Adrenal gland (tissue), 19 donors: ENCODE measurements at regions of chr17 and their contacts with region 1.

Region 1: GRCh38 chr17:55053855-55054254 is 85.3 kb downstream of the STXBP4 start:
- DNase-seq: no peak
- H3K4me3 ChIP-seq: no peak overlapping the region
- H3K27ac ChIP-seq: no peak overlapping the region
- H3K4me1 ChIP-seq: no peaks in the 10 kb centered on the region
- H3K27me3 ChIP-seq: no peaks in the 10 kb centered on the region
- CTCF ChIP-seq: peak; percentile 26 to 64 (median 48)
- POLR2A ChIP-seq: no peak

Region 2: DNA sequence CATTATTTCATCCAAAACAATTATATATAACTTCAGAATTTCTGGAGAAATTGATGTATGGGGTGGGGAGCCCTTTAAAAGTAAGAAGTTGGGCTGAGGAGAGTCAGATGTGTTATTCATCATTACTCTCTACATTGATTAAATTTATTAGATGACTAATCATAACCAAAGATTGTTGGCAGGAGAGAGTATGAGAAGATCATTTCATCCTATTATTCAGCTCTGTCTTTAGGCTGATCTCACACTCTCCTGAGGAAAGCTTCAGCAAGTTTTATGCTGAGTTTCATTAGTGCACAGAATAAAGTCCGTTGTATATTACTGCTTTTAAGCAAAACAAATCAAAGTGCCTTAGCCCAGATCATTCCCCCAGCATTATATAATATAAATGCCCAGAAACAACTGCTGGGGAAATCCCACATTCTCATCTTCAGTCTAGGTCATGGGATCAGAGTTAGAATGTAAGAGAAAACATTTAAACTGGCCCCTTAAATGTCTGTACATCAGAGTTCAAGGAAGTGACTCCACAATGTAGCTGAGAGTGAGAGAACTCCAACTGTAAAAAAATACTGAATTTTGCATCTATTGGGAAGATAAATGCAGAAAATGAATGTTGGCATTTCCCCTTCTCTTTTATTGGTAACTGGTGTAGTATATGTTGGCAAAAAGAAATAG is 80.8 kb after region 1 on chr17:
- intact Hi-C with region 1: no loop called
- DNase-seq: no peak
- H3K4me3 ChIP-seq: no peak overlapping the region
- H3K27ac ChIP-seq: no peak overlapping the region
- H3K4me1 ChIP-seq: peaks cover 0 to 6% of the 10 kb centered on the region in 2 donors
- H3K27me3 ChIP-seq: no peaks in the 10 kb centered on the region
- CTCF ChIP-seq: no peak
- POLR2A ChIP-seq: no peak

Region 3: GRCh38 chr17:55238179-55238930 is 184.5 kb after region 1 on chr17:
- intact Hi-C with region 1: loop called in 1 of 2 experiments (anchors 10 kb)
- DNase-seq: peak; percentile 93 to 98 (median 94)
- H3K4me3 ChIP-seq: peak overlapping the region in 2 of 4 donors; percentile 39 to 63
- H3K27ac ChIP-seq: peak overlapping the region in 4 of 5 donors; percentile 53 to 89 (median 74)
- H3K4me1 ChIP-seq: peaks cover 0 to 20% of the 10 kb centered on the region in 2 donors
- H3K27me3 ChIP-seq: no peaks in the 10 kb centered on the region
- CTCF ChIP-seq: no peak
- POLR2A ChIP-seq: peak in 1 of 2 donors; percentile 84